Activated CD8-positive, alpha-beta T cell treated with anti-CD3 and anti-CD28 coated beads for 36 hours (primary cell): ENCODE measurements at regions of chrX and their contacts with region 1.

Region 1: GRCh38 chrX:15158736-15159406 is 111.0 kb downstream of the ASB9 start:
- DNase-seq: peak; percentile 41
- ATAC-seq: peak; percentile 90
- H3K4me3 Mint-ChIP-seq: peak overlapping the region; percentile 65
- H3K27ac Mint-ChIP-seq: peak overlapping the region; percentile 89
- H3K4me1 Mint-ChIP-seq: peaks cover 32% of the 10 kb centered on the region
- H3K27me3 Mint-ChIP-seq: no peaks in the 10 kb centered on the region
- CTCF ChIP-seq: no peak

Region 2: GRCh38 chrX:15204130-15204751 is 45.4 kb after region 1 on chrX:
- CTCF ChIA-PET with region 1: interaction called, 5 read pairs
- POLR2A ChIA-PET with region 1: no interaction called
- intact Hi-C with region 1: loop called (anchors 2 kb)
- DNase-seq: no peak
- ATAC-seq: peak; percentile 64
- H3K4me3 Mint-ChIP-seq: no peak overlapping the region
- H3K27ac Mint-ChIP-seq: peak overlapping the region; percentile 80
- H3K4me1 Mint-ChIP-seq: peaks cover 42% of the 10 kb centered on the region
- H3K27me3 Mint-ChIP-seq: no peaks in the 10 kb centered on the region
- CTCF ChIP-seq: no peak